Natural killer cell (primary cell): ENCODE measurements at regions of chr15 and their contacts with region 1.

Region 1: GRCh38 chr15:26665957-26666791 is 106.7 kb downstream of the GABRB3 start:
- DNase-seq: no peak
- ATAC-seq: no peak
- H3K4me3 ChIP-seq: no peak overlapping the region
- H3K4me3 Mint-ChIP-seq: no peak overlapping the region
- H3K27ac ChIP-seq: no peak overlapping the region
- H3K27ac Mint-ChIP-seq: no peak overlapping the region
- H3K4me1 ChIP-seq: no peaks in the 10 kb centered on the region
- H3K4me1 Mint-ChIP-seq: no peaks in the 10 kb centered on the region
- H3K27me3 ChIP-seq: no peaks in the 10 kb centered on the region
- H3K27me3 Mint-ChIP-seq: no peaks in the 10 kb centered on the region
- CTCF ChIP-seq: no peak

Region 2: GRCh38 chr15:26651909-26652308 is 14.3 kb before region 1 on chr15:
- intact Hi-C with region 1: no loop called
- DNase-seq: no peak
- ATAC-seq: no peak
- H3K4me3 ChIP-seq: no peak overlapping the region
- H3K4me3 Mint-ChIP-seq: no peak overlapping the region
- H3K27ac ChIP-seq: no peak overlapping the region
- H3K27ac Mint-ChIP-seq: no peak overlapping the region
- H3K4me1 ChIP-seq: no peaks in the 10 kb centered on the region
- H3K4me1 Mint-ChIP-seq: no peaks in the 10 kb centered on the region
- H3K27me3 ChIP-seq: no peaks in the 10 kb centered on the region
- H3K27me3 Mint-ChIP-seq: no peaks in the 10 kb centered on the region
- CTCF ChIP-seq: no peak

Region 3: DNA sequence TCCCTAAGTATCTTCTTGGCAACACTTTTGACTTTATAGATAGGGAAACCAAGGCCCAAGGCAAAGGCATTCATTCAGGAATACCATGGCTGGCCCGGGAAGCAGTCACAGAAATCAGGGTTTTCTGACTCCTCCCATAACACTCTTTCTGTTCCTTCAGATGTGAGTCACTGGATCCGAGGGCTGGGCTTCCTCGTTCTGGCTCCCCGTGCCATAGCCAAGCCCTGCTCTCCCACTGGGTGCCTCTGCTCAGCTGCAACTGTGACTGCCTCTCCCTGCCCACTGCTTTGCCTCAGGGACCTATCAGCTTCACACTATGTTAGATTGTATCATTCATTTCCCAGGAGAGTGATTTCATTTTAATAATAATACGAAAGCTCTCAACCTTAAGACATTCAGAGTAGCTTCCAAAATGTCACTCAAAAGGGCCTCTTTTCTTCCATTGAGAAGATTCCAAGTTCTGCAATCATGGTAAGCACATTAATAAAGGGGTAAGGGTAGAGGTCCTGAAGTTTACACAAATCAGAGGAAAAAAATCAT is 56.5 kb after region 1 on chr15:
- intact Hi-C with region 1: loop called (anchors 10 kb)
- DNase-seq: no peak
- ATAC-seq: no peak
- H3K4me3 ChIP-seq: no peak overlapping the region
- H3K4me3 Mint-ChIP-seq: no peak overlapping the region
- H3K27ac ChIP-seq: no peak overlapping the region
- H3K27ac Mint-ChIP-seq: no peak overlapping the region
- H3K4me1 ChIP-seq: no peaks in the 10 kb centered on the region
- H3K4me1 Mint-ChIP-seq: no peaks in the 10 kb centered on the region
- H3K27me3 ChIP-seq: no peaks in the 10 kb centered on the region
- H3K27me3 Mint-ChIP-seq: no peaks in the 10 kb centered on the region
- CTCF ChIP-seq: no peak